Gastrocnemius medialis (tissue), 4 donors: ENCODE measurements at regions of chr17 and their contacts with region 1.

Region 1: DNA sequence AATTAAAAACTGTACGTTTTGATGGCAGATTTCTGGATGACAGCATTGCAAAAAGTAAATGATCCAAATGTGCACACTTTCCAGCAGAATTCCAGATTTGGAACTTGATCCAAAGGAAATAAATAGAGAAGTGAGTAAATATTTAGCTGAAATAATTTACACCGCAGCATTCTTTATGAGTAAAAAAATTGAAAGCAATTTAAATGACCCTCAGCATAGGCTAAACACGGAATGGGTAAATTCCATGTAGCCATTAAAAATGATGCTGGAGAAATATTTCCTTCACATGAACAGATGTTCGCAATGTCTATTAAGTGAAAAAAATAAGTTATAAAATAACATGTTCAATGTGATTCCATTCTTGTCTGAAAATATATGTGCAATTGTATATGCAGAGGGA is 424.8 kb downstream of the HS3ST3B1 start:
- DNase-seq: no peak
- ATAC-seq: no peak
- H3K4me3 ChIP-seq: no peak overlapping the region
- H3K27ac ChIP-seq: no peak overlapping the region
- H3K4me1 ChIP-seq: no peaks in the 10 kb centered on the region
- H3K27me3 ChIP-seq: no peaks in the 10 kb centered on the region
- CTCF ChIP-seq: no peak
- POLR2A ChIP-seq: no peak

Region 2: GRCh38 chr17:14672830-14673229 is 52.9 kb before region 1 on chr17:
- in situ Hi-C with region 1: loop called in 1 of 4 experiments (anchors 5 kb)
- intact Hi-C with region 1: no loop called
- DNase-seq: peak in 1 of 2 donors; percentile 17
- ATAC-seq: no peak
- H3K4me3 ChIP-seq: no peak overlapping the region
- H3K27ac ChIP-seq: no peak overlapping the region
- H3K4me1 ChIP-seq: no peaks in the 10 kb centered on the region
- H3K27me3 ChIP-seq: no peaks in the 10 kb centered on the region
- CTCF ChIP-seq: no peak
- POLR2A ChIP-seq: no peak

Region 3: DNA sequence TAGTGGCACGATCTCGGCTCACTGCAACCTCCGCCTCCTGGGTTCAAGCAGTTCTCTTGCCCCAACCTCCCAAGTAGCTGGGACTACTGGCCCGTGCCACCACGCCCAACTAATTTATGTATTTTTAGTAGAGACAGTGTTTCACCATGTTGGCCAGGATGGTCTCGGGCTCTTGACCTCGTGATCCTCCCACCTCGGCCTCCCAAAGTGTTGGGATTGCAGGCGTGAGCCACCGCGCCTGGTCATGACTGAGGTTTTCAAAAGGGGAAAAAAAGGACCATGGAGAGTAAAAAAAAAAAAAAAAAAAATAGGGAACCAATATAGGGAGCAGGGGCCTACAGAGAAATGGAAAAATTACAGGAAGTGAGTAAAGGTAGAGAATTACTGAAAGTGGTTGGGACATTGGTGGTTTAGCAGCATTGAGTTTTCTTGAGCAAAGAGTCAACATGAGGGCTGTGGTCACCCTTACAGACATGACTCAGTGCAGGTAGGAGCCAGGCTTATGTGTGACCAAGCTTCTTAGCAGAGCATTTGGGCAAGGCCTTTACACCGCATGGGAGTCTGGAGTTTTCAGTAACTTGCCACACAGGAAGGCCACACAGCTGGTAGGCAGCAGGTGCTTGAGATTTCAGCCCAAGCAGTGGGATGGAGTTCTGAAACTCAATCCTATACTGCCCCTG is 22.4 kb after region 1 on chr17:
- in situ Hi-C with region 1: no loop called
- intact Hi-C with region 1: no loop called
- DNase-seq: no peak
- ATAC-seq: no peak
- H3K4me3 ChIP-seq: no peak overlapping the region
- H3K27ac ChIP-seq: no peak overlapping the region
- H3K4me1 ChIP-seq: no peaks in the 10 kb centered on the region
- H3K27me3 ChIP-seq: no peaks in the 10 kb centered on the region
- CTCF ChIP-seq: no peak
- POLR2A ChIP-seq: no peak